Psoas muscle (tissue), 8 donors: ENCODE measurements at regions of chr12 and their contacts with region 1.

Region 1: DNA sequence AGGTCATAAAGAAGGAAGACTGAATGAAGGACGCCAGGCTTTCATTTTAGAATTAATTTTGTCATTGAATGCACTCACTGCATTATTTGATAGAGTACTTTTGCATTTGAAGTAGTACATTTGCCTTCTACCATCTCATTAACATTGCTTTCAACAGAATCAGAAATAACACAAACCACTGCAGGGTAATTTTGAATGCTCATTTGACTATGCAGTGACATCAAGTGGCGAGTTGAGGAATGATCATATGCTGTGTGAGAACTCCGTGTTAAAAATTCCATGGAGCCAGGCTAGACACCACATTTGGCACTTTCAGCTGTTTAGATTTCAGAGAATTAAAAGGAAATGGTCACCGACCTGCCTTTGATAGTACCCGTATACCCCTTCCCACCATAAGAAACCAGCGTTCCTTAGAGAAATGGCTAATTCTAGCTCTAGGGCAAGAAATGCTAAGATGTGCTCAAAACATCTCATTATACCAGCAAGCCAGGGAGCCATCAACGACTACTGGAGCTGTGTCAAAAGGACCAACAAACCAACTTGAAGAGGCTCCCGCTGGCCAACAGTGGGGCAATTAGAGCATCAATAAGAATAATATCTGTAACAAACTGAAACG is 16.5 kb downstream of the HEBP1 start:
- DNase-seq: no peak
- ATAC-seq: peak; percentile 59 to 88 (median 65)
- H3K4me3 ChIP-seq: no peak overlapping the region
- H3K27ac ChIP-seq: no peak overlapping the region
- H3K4me1 ChIP-seq: no peaks in the 10 kb centered on the region
- H3K27me3 ChIP-seq: no peaks in the 10 kb centered on the region
- CTCF ChIP-seq: peak; percentile 56

Region 2: DNA sequence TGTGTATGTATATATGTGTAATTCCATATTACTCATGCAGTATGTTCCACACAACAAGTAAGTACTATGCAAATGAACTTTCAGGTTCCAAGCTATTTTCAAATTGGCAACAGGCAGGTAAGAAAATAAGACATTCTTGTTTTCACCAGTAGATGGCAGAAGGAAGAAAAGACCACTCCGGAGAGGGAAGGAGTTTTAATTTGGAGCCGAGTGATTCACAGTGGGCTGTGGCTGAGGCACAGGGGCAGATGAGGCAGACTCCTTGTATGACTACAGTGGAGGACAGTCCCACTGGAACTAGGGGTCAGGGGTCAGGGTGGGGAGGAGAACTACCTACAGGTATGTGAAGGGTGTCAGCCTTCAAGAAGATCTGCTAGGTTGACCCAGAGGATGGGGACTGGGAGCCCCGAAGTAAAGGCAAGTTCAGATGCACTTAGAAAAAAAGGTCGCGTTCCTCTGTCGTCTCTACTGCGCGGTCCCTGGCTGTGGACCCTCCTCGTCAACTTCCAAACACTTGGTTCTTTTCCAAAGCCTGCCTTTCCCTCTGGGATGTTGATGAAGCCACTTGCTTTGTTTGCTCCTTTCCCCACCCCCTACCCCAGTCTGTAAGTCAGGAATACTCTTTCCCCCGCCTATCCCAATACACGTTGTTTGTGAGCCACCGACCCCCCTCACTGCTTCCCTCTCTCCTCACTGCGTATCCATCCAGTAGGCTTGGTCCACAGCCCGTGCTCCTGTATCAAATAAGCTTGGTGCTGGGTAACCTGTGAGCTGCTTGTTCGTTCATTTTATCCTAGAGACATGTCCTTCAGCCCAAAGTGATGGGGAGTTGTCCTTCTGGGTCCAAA is 146.3 kb before region 1 on chr12:
- intact Hi-C with region 1: loop called in 1 of 2 experiments (anchors 10 kb)
- DNase-seq: peak; percentile 37 to 54
- ATAC-seq: peak; percentile 49 to 79 (median 70)
- H3K4me3 ChIP-seq: no peak overlapping the region
- H3K27ac ChIP-seq: no peak overlapping the region
- H3K4me1 ChIP-seq: no peaks in the 10 kb centered on the region
- H3K27me3 ChIP-seq: no peaks in the 10 kb centered on the region
- CTCF ChIP-seq: peak; percentile 38